ENCODE measurements at regions of chr1 and their contacts with region 1.

Region 1: DNA sequence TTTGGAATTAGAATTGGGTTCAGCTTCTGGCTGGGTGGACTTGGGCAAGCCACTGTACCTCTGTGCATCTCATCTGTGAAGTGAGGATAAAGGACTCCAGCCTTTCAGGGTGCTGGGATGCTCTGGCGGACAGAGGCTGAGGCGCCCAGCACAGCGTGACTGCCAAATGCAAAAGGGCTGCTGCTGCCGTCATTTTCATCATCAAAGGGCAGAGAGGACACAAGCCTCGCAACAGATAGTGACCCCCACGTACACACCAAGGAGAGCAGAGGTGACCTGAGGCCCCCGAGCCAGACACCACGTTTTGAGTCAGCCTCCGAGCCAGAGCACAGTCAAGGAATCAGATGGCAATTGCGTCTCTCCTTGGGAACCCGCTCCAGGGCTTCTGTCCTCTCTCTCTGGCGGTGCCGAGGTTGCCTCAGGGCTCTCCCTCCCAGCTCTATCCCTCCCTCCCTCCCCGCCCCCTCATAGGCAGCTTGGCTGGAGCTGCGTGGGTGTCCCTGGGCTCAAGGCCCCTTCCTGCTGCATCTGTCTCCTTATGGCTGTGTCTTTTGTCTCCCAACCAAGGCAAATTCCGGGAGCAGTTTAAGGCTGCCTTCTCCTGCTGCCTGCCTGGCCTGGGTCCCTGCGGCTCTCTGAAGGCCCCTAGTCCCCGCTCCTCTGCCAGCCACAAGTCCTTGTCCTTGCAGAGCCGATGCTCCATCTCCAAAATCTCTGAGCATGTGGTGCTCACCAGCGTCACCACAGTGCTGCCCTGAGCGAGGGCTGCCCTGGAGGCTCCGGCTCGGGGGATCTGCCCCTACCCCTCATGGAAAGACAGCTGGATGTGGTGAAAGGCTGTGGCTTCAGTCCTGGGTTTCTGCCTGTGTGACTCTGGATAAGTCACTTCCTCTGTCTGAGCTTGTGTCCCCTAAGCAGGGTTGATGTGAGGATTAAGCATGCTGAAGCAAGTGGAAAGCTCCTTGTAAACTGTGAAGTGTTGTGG is 9.0 kb downstream of the HCRTR1 start:
- DNase-seq: no peak
- ATAC-seq: no peak

Region 2: GRCh38 chr1:31182352-31182751 is 444.2 kb before region 1 on chr1:
- intact Hi-C with region 1: no loop called
- DNase-seq: peak; percentile 81
- ATAC-seq: peak; percentile 91

Region 3: GRCh38 chr1:31584041-31584868 is 42.3 kb before region 1 on chr1:
- intact Hi-C with region 1: loop called (anchors 5 kb)
- DNase-seq: peak; percentile 84
- ATAC-seq: peak; percentile 53